CD4-positive, alpha-beta T cell (primary cell): ENCODE measurements at regions of chr19 and their contacts with region 1.

Region 1: GRCh38 chr19:52527134-52527955 is at the start of gene ZNF808:
- DNase-seq: peak; percentile 93 to 100 (median 97)
- ATAC-seq: peak; percentile 93
- H3K4me3 ChIP-seq: peak within 1 kb of the TSS; percentile 95
- H3K4me3 Mint-ChIP-seq: peak within 1 kb of the TSS; percentile 99
- H3K27ac ChIP-seq: peak within 1 kb of the TSS; percentile 83 to 89
- H3K27ac Mint-ChIP-seq: peak within 1 kb of the TSS; percentile 99
- H3K4me1 ChIP-seq: peaks cover 20% of the 10 kb centered on the region
- H3K4me1 Mint-ChIP-seq: peaks cover 31% of the 10 kb centered on the region
- H3K27me3 ChIP-seq: no peaks in the 10 kb centered on the region
- H3K27me3 Mint-ChIP-seq: no peaks in the 10 kb centered on the region
- CTCF ChIP-seq: peak; percentile 35
- total RNA-seq, gene ZNF808: 13.4 to 15.3 TPM

Region 2: GRCh38 chr19:52336117-52336790 is 191.1 kb before region 1 on chr19 and contains the start of gene ZNF610:
- CTCF ChIA-PET with region 1: no interaction called
- POLR2A ChIA-PET with region 1: no interaction called
- intact Hi-C with region 1: loop called in 1 of 2 experiments (anchors 5 kb)
- DNase-seq: peak; percentile 75 to 91 (median 84)
- ATAC-seq: peak; percentile 98
- H3K4me3 ChIP-seq: peak within 1 kb of the TSS; percentile 84
- H3K4me3 Mint-ChIP-seq: peak within 1 kb of the TSS; percentile 94
- H3K27ac ChIP-seq: peak within 1 kb of the TSS; percentile 69 to 79
- H3K27ac Mint-ChIP-seq: peak within 1 kb of the TSS; percentile 94
- H3K4me1 ChIP-seq: peaks cover 13% of the 10 kb centered on the region
- H3K4me1 Mint-ChIP-seq: peaks cover 17% of the 10 kb centered on the region
- H3K27me3 ChIP-seq: no peaks in the 10 kb centered on the region
- H3K27me3 Mint-ChIP-seq: no peaks in the 10 kb centered on the region
- CTCF ChIP-seq: no peak
- total RNA-seq, gene ZNF610: 0.52 to 0.53 TPM

Region 3: GRCh38 chr19:52570000-52570861 is 42.9 kb after region 1 on chr19 and contains the start of gene ZNF701:
- CTCF ChIA-PET with region 1: no interaction called
- POLR2A ChIA-PET with region 1: no interaction called
- intact Hi-C with region 1: loop called (anchors 1 kb)
- DNase-seq: peak; percentile 92 to 98 (median 95)
- ATAC-seq: peak; percentile 97
- H3K4me3 ChIP-seq: peak within 1 kb of the TSS; percentile 93
- H3K4me3 Mint-ChIP-seq: peak within 1 kb of the TSS; percentile 87
- H3K27ac ChIP-seq: peak within 1 kb of the TSS; percentile 77 to 87
- H3K27ac Mint-ChIP-seq: peak within 1 kb of the TSS; percentile 84
- H3K4me1 ChIP-seq: peaks cover 20% of the 10 kb centered on the region
- H3K4me1 Mint-ChIP-seq: peaks cover 37% of the 10 kb centered on the region
- H3K27me3 ChIP-seq: no peaks in the 10 kb centered on the region
- H3K27me3 Mint-ChIP-seq: no peaks in the 10 kb centered on the region
- CTCF ChIP-seq: peak; percentile 36
- total RNA-seq, gene ZNF701: 7.9 to 8.2 TPM

Region 4: GRCh38 chr19:52637718-52638585 is 110.6 kb after region 1 on chr19 and contains the start of gene ZNF83:
- CTCF ChIA-PET with region 1: no interaction called
- POLR2A ChIA-PET with region 1: no interaction called
- intact Hi-C with region 1: loop called in 1 of 2 experiments (anchors 5 kb)
- DNase-seq: peak; percentile 85 to 99 (median 94)
- ATAC-seq: peak; percentile 95
- H3K4me3 ChIP-seq: peak within 1 kb of the TSS; percentile 75
- H3K4me3 Mint-ChIP-seq: peak within 1 kb of the TSS; percentile 92
- H3K27ac ChIP-seq: peak within 1 kb of the TSS; percentile 77 to 82
- H3K27ac Mint-ChIP-seq: peak within 1 kb of the TSS; percentile 93
- H3K4me1 ChIP-seq: peaks cover 21% of the 10 kb centered on the region
- H3K4me1 Mint-ChIP-seq: peaks cover 40% of the 10 kb centered on the region
- H3K27me3 ChIP-seq: no peaks in the 10 kb centered on the region
- H3K27me3 Mint-ChIP-seq: no peaks in the 10 kb centered on the region
- CTCF ChIP-seq: no peak
- total RNA-seq, gene ZNF83: 58.7 to 60.2 TPM

Region 5: GRCh38 chr19:52734893-52735661 is 207.7 kb after region 1 on chr19 and contains the start of gene ZNF611:
- CTCF ChIA-PET with region 1: interaction called, 4 read pairs
- POLR2A ChIA-PET with region 1: no interaction called
- intact Hi-C with region 1: loop called in 1 of 2 experiments (anchors 2 kb)
- DNase-seq: peak; percentile 98 to 100 (median 99)
- ATAC-seq: peak; percentile 97
- H3K4me3 ChIP-seq: peak within 1 kb of the TSS; percentile 98
- H3K4me3 Mint-ChIP-seq: peak within 1 kb of the TSS; percentile 95
- H3K27ac ChIP-seq: peak within 1 kb of the TSS; percentile 74 to 93
- H3K27ac Mint-ChIP-seq: peak within 1 kb of the TSS; percentile 96
- H3K4me1 ChIP-seq: peaks cover 23% of the 10 kb centered on the region
- H3K4me1 Mint-ChIP-seq: peaks cover 28% of the 10 kb centered on the region
- H3K27me3 ChIP-seq: no peaks in the 10 kb centered on the region
- H3K27me3 Mint-ChIP-seq: no peaks in the 10 kb centered on the region
- CTCF ChIP-seq: peak; percentile 70
- total RNA-seq, gene ZNF611: 14.6 to 15.5 TPM

Region 6: GRCh38 chr19:52922841-52923777 is 395.8 kb after region 1 on chr19 and contains the start of gene ZNF888:
- CTCF ChIA-PET with region 1: no interaction called
- POLR2A ChIA-PET with region 1: no interaction called
- intact Hi-C with region 1: loop called in 1 of 2 experiments (anchors 5 kb)
- DNase-seq: peak; percentile 71 to 92 (median 78)
- ATAC-seq: peak; percentile 99
- H3K4me3 ChIP-seq: peak within 1 kb of the TSS; percentile 68
- H3K4me3 Mint-ChIP-seq: peak within 1 kb of the TSS; percentile 96
- H3K27ac ChIP-seq: peak within 1 kb of the TSS in 1 of 2 donors; percentile 38
- H3K27ac Mint-ChIP-seq: peak within 1 kb of the TSS; percentile 89
- H3K4me1 ChIP-seq: peaks cover 22% of the 10 kb centered on the region
- H3K4me1 Mint-ChIP-seq: peaks cover 34% of the 10 kb centered on the region
- H3K27me3 ChIP-seq: peaks cover 0 to 2% of the 10 kb centered on the region in 2 experiments
- H3K27me3 Mint-ChIP-seq: no peaks in the 10 kb centered on the region
- CTCF ChIP-seq: no peak
- total RNA-seq, gene ZNF888: 2.5 to 3.0 TPM